Activated CD4-positive, alpha-beta T cell treated with anti-CD3 and anti-CD28 coated beads for 36 hours (primary cell): ENCODE measurements at regions of chr4 and their contacts with region 1.

Region 1: GRCh38 chr4:119041951-119042560 is 93.6 kb upstream of the MYOZ2 start:
- DNase-seq: peak; percentile 71
- ATAC-seq: peak; percentile 85
- H3K4me3 Mint-ChIP-seq: no peak overlapping the region
- H3K27ac Mint-ChIP-seq: no peak overlapping the region
- H3K4me1 Mint-ChIP-seq: peaks cover 16% of the 10 kb centered on the region
- H3K27me3 Mint-ChIP-seq: no peaks in the 10 kb centered on the region

Region 2: DNA sequence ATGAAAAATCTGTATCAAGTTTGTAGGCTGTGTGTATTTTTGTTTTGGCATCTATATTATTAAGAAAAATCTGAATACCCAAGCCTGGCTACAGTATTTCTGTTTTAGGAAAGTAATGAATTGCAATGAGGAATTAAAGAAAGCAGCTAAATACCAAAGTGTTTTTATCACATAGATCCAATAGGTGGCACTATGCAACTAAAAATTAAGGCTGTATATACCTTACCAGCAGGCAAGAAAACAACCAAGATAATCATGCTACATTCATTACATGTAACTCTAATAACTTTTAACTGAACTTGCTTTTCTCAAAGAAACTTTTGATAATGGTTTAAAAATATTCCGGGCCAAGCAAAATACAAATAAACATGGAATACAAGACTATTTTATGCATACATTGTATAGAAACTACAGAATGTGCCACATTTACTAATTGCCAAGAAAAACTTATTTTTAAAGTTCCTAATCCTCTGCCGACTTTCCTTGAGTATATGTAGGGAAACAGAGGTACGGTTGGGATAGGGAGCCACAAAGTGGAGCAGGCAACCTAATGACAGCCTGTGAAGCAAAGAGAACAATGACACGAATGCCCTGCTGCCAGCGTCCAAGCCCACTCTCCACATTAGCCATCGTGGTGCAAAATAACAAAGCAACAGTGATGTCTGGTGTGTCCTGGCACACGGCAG is 269.8 kb before region 1 on chr4:
- CTCF ChIA-PET with region 1: interaction called, 5 read pairs
- POLR2A ChIA-PET with region 1: no interaction called
- intact Hi-C with region 1: loop called in 1 of 2 experiments (anchors 5 kb)
- DNase-seq: no peak
- ATAC-seq: peak; percentile 55
- H3K4me3 Mint-ChIP-seq: no peak overlapping the region
- H3K27ac Mint-ChIP-seq: no peak overlapping the region
- H3K4me1 Mint-ChIP-seq: no peaks in the 10 kb centered on the region
- H3K27me3 Mint-ChIP-seq: no peaks in the 10 kb centered on the region

Region 3: DNA sequence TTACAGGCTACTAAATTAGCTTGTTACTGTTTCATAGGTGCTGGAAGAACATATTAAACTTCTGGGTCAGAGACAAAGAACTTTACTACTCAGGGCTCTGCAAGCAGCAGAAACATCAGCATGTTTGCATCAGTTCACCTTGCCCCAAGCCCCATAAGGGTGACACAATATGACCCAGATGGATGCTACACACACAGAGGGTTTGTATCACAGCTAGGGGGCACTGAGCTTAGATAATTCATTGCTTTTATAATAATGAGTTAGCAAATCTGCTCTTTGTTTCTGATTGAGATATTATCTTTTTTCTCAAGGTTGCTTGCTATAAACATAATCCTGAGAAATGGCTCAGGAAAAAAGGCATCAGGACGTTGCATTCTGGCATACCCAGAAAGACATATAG is 158.2 kb before region 1 on chr4:
- CTCF ChIA-PET with region 1: no interaction called
- POLR2A ChIA-PET with region 1: no interaction called
- intact Hi-C with region 1: no loop called
- DNase-seq: no peak
- ATAC-seq: no peak
- H3K4me3 Mint-ChIP-seq: no peak overlapping the region
- H3K27ac Mint-ChIP-seq: no peak overlapping the region
- H3K4me1 Mint-ChIP-seq: peaks cover 4% of the 10 kb centered on the region
- H3K27me3 Mint-ChIP-seq: peaks cover 20% of the 10 kb centered on the region

Region 4: GRCh38 chr4:118898684-118899138 is 143.3 kb before region 1 on chr4:
- CTCF ChIA-PET with region 1: no interaction called
- POLR2A ChIA-PET with region 1: no interaction called
- intact Hi-C with region 1: no loop called
- DNase-seq: no peak
- ATAC-seq: no peak
- H3K4me3 Mint-ChIP-seq: no peak overlapping the region
- H3K27ac Mint-ChIP-seq: no peak overlapping the region
- H3K4me1 Mint-ChIP-seq: no peaks in the 10 kb centered on the region
- H3K27me3 Mint-ChIP-seq: peaks cover 6% of the 10 kb centered on the region

Region 5: GRCh38 chr4:119053997-119054396 is 11.9 kb after region 1 on chr4:
- CTCF ChIA-PET with region 1: interaction called, 17 read pairs
- POLR2A ChIA-PET with region 1: interaction called, 3 read pairs
- intact Hi-C with region 1: no loop called
- DNase-seq: no peak
- ATAC-seq: no peak
- H3K4me3 Mint-ChIP-seq: no peak overlapping the region
- H3K27ac Mint-ChIP-seq: no peak overlapping the region
- H3K4me1 Mint-ChIP-seq: no peaks in the 10 kb centered on the region
- H3K27me3 Mint-ChIP-seq: peaks cover 2% of the 10 kb centered on the region

Region 6: GRCh38 chr4:119286377-119287002 is 244.4 kb after region 1 on chr4:
- CTCF ChIA-PET with region 1: interaction called, 30 read pairs
- POLR2A ChIA-PET with region 1: no interaction called
- intact Hi-C with region 1: loop called (anchors 1 kb)
- DNase-seq: peak; percentile 47
- ATAC-seq: no peak
- H3K4me3 Mint-ChIP-seq: no peak overlapping the region
- H3K27ac Mint-ChIP-seq: no peak overlapping the region
- H3K4me1 Mint-ChIP-seq: peaks cover 12% of the 10 kb centered on the region
- H3K27me3 Mint-ChIP-seq: no peaks in the 10 kb centered on the region

Region 7: DNA sequence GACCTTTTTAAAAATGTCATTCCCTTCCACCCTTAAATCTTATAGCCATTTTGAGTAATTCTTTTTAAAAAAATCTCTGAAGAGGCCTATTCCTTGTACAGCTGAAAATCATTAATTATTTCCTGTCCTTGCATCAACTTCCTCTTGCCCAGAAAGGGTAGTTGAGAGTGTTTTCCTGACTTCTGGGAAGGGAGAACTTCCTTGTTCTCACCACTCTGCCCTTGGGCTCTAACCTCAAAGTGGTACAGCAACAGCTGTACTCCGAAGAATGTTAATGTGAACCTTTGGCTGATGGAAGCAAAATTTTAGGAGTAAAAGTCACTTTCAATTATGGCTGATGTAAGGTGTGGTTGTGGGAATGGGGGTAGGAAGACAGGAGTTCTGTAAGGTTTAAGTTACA is 295.0 kb after region 1 on chr4:
- CTCF ChIA-PET with region 1: no interaction called
- POLR2A ChIA-PET with region 1: no interaction called
- intact Hi-C with region 1: no loop called
- DNase-seq: no peak
- ATAC-seq: no peak
- H3K4me3 Mint-ChIP-seq: no peak overlapping the region
- H3K27ac Mint-ChIP-seq: peak overlapping the region; percentile 6
- H3K4me1 Mint-ChIP-seq: no peaks in the 10 kb centered on the region
- H3K27me3 Mint-ChIP-seq: no peaks in the 10 kb centered on the region

Region 8: GRCh38 chr4:119490335-119490734 is 448.3 kb after region 1 on chr4:
- CTCF ChIA-PET with region 1: interaction called, 12 read pairs
- POLR2A ChIA-PET with region 1: no interaction called
- intact Hi-C with region 1: loop called in 1 of 2 experiments (anchors 10 kb)
- DNase-seq: no peak
- ATAC-seq: no peak
- H3K4me3 Mint-ChIP-seq: no peak overlapping the region
- H3K27ac Mint-ChIP-seq: no peak overlapping the region
- H3K4me1 Mint-ChIP-seq: no peaks in the 10 kb centered on the region
- H3K27me3 Mint-ChIP-seq: no peaks in the 10 kb centered on the region